Activated CD4-positive, alpha-beta T cell treated with anti-CD3 and anti-CD28 coated beads, Interleukin-2, amount 10 ng/mL, durations not matched to agents 24 days and 14 days (primary cell): ENCODE measurements at regions of chr5 and their contacts with region 1.

Region 1: GRCh38 chr5:171907725-171908343 is 98.6 kb downstream of the FBXW11 start:
- DNase-seq: peak; percentile 86
- H3K4me3 Mint-ChIP-seq: no peak overlapping the region
- H3K27ac Mint-ChIP-seq: peak overlapping the region; percentile 76
- H3K4me1 Mint-ChIP-seq: peaks cover 36% of the 10 kb centered on the region
- H3K27me3 Mint-ChIP-seq: no peaks in the 10 kb centered on the region

Region 2: DNA sequence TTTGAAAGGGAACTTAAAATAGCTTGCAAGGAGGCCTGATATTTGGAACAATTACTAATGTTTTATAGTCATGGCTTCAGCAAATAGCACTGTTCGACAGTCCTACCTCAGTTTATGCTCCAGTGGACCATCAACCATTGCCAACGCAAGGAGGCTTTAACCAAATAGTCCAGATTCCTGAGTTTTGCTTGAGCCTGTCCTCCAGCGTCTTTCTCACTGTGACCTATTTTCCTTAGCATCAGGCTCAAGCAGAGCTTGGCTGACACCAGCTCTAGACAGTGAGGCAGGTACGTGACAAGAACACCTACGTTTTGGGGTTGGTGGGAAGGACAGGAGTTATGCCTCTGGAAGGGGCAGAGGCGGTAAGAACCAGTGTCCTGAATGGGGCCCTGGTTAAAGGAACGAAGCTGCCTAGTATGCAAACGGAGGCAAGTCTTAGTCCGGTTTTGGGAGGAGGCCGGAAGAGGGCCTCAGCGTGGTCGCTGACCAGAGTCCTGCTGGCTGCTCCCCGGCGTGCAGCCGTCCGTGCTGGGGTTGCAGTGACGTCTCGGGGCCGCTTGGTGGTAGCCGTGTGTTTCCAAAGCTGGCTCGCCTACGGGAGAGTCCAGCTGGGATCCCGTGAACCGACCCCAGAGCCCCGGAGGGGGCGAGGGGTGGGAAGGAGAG is 489.4 kb before region 1 on chr5:
- intact Hi-C with region 1: loop called (anchors 1 kb)
- DNase-seq: peak; percentile 88
- H3K4me3 Mint-ChIP-seq: peak overlapping the region; percentile 80
- H3K27ac Mint-ChIP-seq: no peak overlapping the region
- H3K4me1 Mint-ChIP-seq: peaks cover 13% of the 10 kb centered on the region
- H3K27me3 Mint-ChIP-seq: peaks cover 20% of the 10 kb centered on the region

Region 3: DNA sequence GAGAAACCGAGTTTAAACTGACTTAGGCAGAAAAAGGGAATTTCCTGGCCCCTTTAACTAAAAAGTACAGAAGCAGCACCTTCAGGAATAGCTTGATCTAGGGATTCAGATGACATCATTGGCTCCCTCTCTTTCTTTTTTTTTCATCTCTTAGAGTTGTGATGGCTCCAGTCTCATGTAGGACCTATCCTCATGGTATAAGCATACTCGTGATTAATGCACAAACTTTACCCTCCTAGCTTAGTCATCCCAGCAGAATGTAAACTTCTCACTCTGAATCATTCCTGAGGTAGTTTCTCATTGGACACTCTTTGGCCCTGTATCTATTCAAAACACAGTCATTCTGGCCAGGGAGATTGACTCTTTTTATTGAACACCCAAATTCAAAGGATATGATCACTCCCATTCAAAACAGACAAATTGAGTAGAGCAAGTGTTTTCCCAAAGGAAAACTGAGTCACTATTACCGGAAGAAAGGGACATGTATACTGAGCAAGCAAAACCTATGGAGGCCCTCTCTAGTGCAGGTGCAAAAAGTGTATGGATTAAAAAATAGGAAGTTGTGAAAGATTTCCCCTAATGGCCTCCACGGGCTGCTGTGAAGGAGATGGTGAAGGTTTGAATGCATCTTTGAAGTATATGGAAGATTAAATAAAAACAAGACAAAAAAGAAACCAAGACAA is 149.8 kb before region 1 on chr5:
- intact Hi-C with region 1: loop called (anchors 2 kb)
- DNase-seq: no peak
- H3K4me3 Mint-ChIP-seq: no peak overlapping the region
- H3K27ac Mint-ChIP-seq: no peak overlapping the region
- H3K4me1 Mint-ChIP-seq: no peaks in the 10 kb centered on the region
- H3K27me3 Mint-ChIP-seq: peaks cover 4% of the 10 kb centered on the region

Region 4: GRCh38 chr5:171924493-171925122 is 16.8 kb after region 1 on chr5:
- intact Hi-C with region 1: no loop called
- DNase-seq: no peak
- H3K4me3 Mint-ChIP-seq: no peak overlapping the region
- H3K27ac Mint-ChIP-seq: no peak overlapping the region
- H3K4me1 Mint-ChIP-seq: peaks cover 9% of the 10 kb centered on the region
- H3K27me3 Mint-ChIP-seq: no peaks in the 10 kb centered on the region

Region 5: GRCh38 chr5:171961117-171961516 is 53.3 kb after region 1 on chr5:
- intact Hi-C with region 1: loop called (anchors 1 kb)
- DNase-seq: peak; percentile 67
- H3K4me3 Mint-ChIP-seq: peak overlapping the region; percentile 21
- H3K27ac Mint-ChIP-seq: peak overlapping the region; percentile 70
- H3K4me1 Mint-ChIP-seq: peaks cover 57% of the 10 kb centered on the region
- H3K27me3 Mint-ChIP-seq: no peaks in the 10 kb centered on the region

Region 6: GRCh38 chr5:172035039-172035438 is 127.2 kb after region 1 on chr5:
- intact Hi-C with region 1: loop called (anchors 1 kb)
- DNase-seq: no peak
- H3K4me3 Mint-ChIP-seq: peak overlapping the region; percentile 31
- H3K27ac Mint-ChIP-seq: peak overlapping the region; percentile 39
- H3K4me1 Mint-ChIP-seq: peaks cover 12% of the 10 kb centered on the region
- H3K27me3 Mint-ChIP-seq: no peaks in the 10 kb centered on the region

Region 7: DNA sequence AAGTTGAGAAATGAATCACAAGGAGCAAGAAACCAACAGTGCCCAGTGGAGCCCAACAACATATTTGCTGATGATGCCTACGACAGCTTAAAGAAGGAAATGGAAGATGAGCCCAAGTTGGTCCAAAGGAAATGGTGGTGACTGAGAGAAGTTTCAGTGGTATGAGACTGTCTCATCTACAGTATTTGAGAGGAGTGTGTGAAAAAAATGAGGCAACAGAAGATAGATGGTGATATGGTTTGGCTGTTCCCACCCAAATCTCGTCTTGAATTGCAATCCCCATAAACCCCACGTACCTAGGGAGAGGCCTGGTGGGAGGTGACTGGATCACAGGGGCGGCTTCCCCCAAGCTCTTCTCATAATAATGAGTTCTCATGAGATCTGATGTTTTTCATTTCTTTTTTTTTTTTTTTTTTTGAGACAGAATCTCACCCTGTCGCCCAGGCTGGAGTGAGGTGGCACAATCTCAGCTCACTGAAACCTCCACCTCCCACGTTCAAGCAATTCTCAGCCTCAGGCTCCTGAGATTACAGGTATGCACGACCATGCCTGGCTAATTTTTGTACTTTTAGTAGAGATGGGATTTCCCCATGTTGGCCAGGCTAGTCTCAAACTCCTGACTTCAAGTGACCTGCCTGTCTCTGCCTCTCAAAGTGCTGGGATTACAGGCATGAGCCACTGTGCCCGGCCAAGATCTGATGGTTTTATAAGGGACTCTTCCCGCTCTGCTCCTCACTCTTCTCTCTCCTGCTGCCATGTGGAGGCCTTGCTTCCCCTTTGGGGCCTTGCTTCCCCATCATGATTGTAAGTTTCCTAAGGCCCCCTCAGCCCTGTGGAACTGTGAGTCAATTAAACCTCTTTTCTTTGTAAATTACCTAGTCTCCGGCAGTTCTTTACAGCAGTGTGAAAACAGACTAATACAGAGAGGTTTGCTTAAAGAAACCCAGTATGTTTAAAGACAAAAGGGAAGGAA is 316.4 kb after region 1 on chr5:
- intact Hi-C with region 1: loop called (anchors 1 kb)
- DNase-seq: peak; percentile 69
- H3K4me3 Mint-ChIP-seq: peak overlapping the region; percentile 17
- H3K27ac Mint-ChIP-seq: peak overlapping the region; percentile 73
- H3K4me1 Mint-ChIP-seq: peaks cover 22% of the 10 kb centered on the region
- H3K27me3 Mint-ChIP-seq: peaks cover 7% of the 10 kb centered on the region

Region 8: DNA sequence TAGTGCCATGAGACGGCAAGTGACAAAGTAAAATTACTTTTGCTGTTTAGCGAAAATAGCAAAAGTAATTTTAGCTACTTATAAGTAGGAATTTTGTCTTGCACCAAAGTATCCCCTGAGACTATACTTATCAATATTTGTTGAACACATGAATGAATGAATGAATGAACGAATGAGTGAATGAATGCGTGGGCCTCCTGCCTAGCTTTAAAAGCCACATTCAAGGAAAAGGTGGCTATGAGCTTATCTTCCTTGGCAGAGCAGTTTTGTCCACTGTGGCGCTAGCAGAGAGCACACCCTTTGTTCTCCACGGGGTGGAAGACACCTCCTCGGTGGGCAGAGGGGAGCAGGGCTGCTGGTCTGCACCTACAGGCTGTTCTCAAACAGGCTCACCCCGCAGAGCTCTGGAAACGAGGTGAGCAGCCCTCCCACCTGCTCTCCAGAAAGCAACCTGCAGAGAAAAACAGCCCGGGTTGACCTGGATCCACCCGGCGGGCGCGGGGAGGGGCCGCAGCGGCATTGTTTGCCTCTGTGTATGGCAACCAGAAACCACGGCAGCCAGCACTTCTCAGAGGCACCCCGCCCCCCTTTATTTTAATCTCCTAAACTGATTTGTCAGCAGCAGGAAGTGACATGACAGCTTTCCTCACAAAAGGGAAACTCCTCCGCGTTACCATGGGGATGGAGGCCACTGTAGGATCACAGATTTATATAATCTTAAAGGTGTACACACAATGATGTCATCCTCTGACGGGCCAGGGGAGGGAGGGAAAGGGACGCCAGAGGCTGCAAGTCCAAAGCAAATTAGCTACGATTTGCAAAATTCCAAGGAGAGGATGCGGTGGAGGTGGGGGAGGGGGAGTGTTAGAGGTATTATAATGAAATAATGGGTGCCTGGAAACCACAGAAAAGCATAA is 857.3 kb after region 1 on chr5:
- intact Hi-C with region 1: loop called (anchors 2 kb)
- DNase-seq: peak; percentile 99
- H3K4me3 Mint-ChIP-seq: peak overlapping the region; percentile 79
- H3K27ac Mint-ChIP-seq: peak overlapping the region; percentile 91
- H3K4me1 Mint-ChIP-seq: peaks cover 26% of the 10 kb centered on the region
- H3K27me3 Mint-ChIP-seq: peaks cover 5% of the 10 kb centered on the region